Activated CD4-positive, alpha-beta T cell treated with anti-CD3 and anti-CD28 coated beads for 36 hours (primary cell): ENCODE measurements at regions of chr15 and their contacts with region 1.

Region 1: GRCh38 chr15:40952901-40953712 is at the start of gene CHAC1:
- DNase-seq: peak; percentile 99
- ATAC-seq: peak; percentile 92
- H3K4me3 Mint-ChIP-seq: peak within 1 kb of the TSS; percentile 93
- H3K27ac Mint-ChIP-seq: peak within 1 kb of the TSS; percentile 97
- H3K4me1 Mint-ChIP-seq: peaks cover 25% of the 10 kb centered on the region
- H3K27me3 Mint-ChIP-seq: peaks cover 2% of the 10 kb centered on the region
- total RNA-seq, gene CHAC1: 31.1 to 32.2 TPM

Region 2: GRCh38 chr15:40928821-40929659 is 24.1 kb before region 1 on chr15 and contains the start of gene DLL4:
- CTCF ChIA-PET with region 1: interaction called, 8 read pairs
- POLR2A ChIA-PET with region 1: interaction called, 6 read pairs
- intact Hi-C with region 1: loop called in 1 of 2 experiments (anchors 1 kb)
- DNase-seq: peak; percentile 69
- ATAC-seq: peak; percentile 54
- H3K4me3 Mint-ChIP-seq: peak within 1 kb of the TSS; percentile 61
- H3K27ac Mint-ChIP-seq: no peak within 1 kb of the TSS
- H3K4me1 Mint-ChIP-seq: peaks cover 32% of the 10 kb centered on the region
- H3K27me3 Mint-ChIP-seq: peaks cover 58% of the 10 kb centered on the region
- total RNA-seq, gene DLL4: 0.18 to 0.30 TPM

Region 3: GRCh38 chr15:40941528-40942336 is 11.4 kb before region 1 on chr15:
- CTCF ChIA-PET with region 1: interaction called, 65 read pairs
- POLR2A ChIA-PET with region 1: interaction called, 19 read pairs
- intact Hi-C with region 1: loop called (anchors 1 kb)
- DNase-seq: peak; percentile 81
- ATAC-seq: peak; percentile 82
- H3K4me3 Mint-ChIP-seq: peak overlapping the region; percentile 80
- H3K27ac Mint-ChIP-seq: peak overlapping the region; percentile 92
- H3K4me1 Mint-ChIP-seq: peaks cover 39% of the 10 kb centered on the region
- H3K27me3 Mint-ChIP-seq: no peaks in the 10 kb centered on the region

Region 4: GRCh38 chr15:41331833-41332787 is 379.0 kb after region 1 on chr15 and contains the start of gene OIP5:
- CTCF ChIA-PET with region 1: no interaction called
- POLR2A ChIA-PET with region 1: no interaction called
- intact Hi-C with region 1: loop called (anchors 1 to 5 kb)
- DNase-seq: peak; percentile 99
- ATAC-seq: peak; percentile 98
- H3K4me3 Mint-ChIP-seq: peak within 1 kb of the TSS; percentile 91
- H3K27ac Mint-ChIP-seq: peak within 1 kb of the TSS; percentile 92
- H3K4me1 Mint-ChIP-seq: peaks cover 26% of the 10 kb centered on the region
- H3K27me3 Mint-ChIP-seq: no peaks in the 10 kb centered on the region
- total RNA-seq, gene OIP5: 11.5 to 14.0 TPM

Region 5: DNA sequence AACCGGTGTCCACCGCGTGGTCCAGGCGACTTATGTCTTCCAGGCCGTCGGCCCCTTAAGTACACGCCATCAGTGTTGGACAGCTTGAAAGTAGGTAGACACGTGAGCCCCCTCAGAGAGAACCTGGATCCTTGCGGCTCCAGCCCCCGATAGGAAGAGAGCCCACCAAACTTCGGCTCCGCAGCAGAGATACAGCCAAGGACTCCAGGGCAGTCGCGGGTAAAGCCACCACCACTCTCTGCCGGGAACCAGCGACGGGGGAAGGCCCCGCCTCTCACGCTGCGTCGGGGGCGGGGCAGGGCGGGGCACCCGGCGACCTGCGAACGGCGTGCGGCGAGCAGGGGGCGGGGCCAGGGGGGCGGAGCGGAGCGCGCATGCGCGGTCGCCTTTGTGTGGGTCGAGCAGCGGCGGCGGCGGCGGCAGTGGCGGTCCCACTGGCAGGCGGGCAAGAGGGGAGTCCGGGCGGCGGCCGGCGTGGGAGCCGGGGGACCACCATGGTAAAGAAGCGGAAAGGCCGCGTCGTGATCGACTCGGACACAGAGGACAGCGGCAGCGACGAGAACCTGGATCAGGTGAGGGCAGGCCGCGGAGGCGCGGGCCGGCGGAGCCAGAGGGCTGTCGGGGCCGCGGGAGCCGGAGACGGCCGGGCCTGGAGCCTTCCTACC is 463.8 kb after region 1 on chr15 and contains the start of gene RTF1:
- CTCF ChIA-PET with region 1: no interaction called
- POLR2A ChIA-PET with region 1: no interaction called
- intact Hi-C with region 1: loop called in 1 of 2 experiments (anchors 1 kb)
- DNase-seq: peak; percentile 98
- ATAC-seq: peak; percentile 94
- H3K4me3 Mint-ChIP-seq: peak within 1 kb of the TSS; percentile 88
- H3K27ac Mint-ChIP-seq: peak within 1 kb of the TSS; percentile 92
- H3K4me1 Mint-ChIP-seq: peaks cover 38% of the 10 kb centered on the region
- H3K27me3 Mint-ChIP-seq: no peaks in the 10 kb centered on the region
- total RNA-seq, gene RTF1: 29.4 to 32.3 TPM

Region 6: GRCh38 chr15:41490355-41490754 is 537.2 kb after region 1 on chr15:
- CTCF ChIA-PET with region 1: no interaction called
- POLR2A ChIA-PET with region 1: no interaction called
- intact Hi-C with region 1: no loop called
- DNase-seq: peak; percentile 68
- ATAC-seq: peak; percentile 64
- H3K4me3 Mint-ChIP-seq: no peak overlapping the region
- H3K27ac Mint-ChIP-seq: peak overlapping the region; percentile 59
- H3K4me1 Mint-ChIP-seq: peaks cover 45% of the 10 kb centered on the region
- H3K27me3 Mint-ChIP-seq: peaks cover 25% of the 10 kb centered on the region